ENCODE measurements at regions of chr6 and their contacts with region 1.

Region 1: GRCh38 chr6:134517145-134517658 is 199.3 kb upstream of the SGK1 start:
- DNase-seq: peak; percentile 85
- ATAC-seq: peak; percentile 95

Region 2: DNA sequence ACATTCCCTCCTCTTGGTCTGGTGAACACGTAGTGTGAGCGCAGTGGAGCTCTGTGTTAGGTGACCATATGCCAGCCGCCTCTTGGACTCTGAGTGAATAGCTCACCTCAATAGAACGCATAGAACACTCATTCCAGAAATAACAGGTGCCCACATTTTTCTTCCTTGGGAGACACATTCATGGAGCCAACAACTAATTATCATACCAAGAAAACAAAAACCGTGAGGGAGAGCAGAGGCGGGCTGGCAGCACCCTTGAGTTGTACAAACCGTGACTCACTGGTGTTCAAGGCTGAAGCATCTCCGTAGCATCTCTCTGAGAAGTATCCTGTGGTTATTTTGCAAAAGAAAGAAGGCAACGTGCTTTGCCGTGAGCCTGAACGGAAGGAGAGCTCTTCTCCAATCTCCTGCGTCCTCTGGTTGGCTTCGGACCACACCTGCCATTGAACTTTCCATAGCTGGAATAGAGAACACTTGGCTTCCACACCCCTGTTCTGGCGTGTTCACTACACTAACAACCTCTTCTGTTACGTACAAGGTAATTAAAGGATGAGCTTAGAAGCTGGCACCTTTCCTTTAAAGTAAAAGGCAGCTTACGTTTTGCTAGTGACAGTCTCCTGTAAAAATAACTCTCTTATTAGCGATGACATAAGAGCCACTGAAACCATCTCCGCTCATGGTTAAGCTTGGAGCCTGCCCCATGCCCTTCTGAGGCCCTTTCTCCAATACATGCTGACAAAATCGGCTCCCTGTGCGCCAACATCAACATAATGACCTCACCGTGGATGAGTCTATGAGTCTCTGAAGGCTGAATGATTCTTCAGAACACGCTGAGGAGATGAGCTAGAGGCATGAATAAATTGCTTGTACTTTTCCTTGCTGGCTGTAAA is 169.0 kb before region 1 on chr6:
- intact Hi-C with region 1: loop called (anchors 10 kb)
- DNase-seq: no peak
- ATAC-seq: peak; percentile 70

Region 3: GRCh38 chr6:134640975-134641429 is 123.8 kb after region 1 on chr6:
- intact Hi-C with region 1: loop called (anchors 10 kb)
- DNase-seq: peak; percentile 78
- ATAC-seq: peak; percentile 91

Region 4: GRCh38 chr6:134720353-134721059 is 203.3 kb after region 1 on chr6:
- intact Hi-C with region 1: loop called (anchors 5 kb)
- DNase-seq: no peak
- ATAC-seq: peak; percentile 56